ENCODE measurements at regions of chr16 and their contacts with region 1.

Region 1: DNA sequence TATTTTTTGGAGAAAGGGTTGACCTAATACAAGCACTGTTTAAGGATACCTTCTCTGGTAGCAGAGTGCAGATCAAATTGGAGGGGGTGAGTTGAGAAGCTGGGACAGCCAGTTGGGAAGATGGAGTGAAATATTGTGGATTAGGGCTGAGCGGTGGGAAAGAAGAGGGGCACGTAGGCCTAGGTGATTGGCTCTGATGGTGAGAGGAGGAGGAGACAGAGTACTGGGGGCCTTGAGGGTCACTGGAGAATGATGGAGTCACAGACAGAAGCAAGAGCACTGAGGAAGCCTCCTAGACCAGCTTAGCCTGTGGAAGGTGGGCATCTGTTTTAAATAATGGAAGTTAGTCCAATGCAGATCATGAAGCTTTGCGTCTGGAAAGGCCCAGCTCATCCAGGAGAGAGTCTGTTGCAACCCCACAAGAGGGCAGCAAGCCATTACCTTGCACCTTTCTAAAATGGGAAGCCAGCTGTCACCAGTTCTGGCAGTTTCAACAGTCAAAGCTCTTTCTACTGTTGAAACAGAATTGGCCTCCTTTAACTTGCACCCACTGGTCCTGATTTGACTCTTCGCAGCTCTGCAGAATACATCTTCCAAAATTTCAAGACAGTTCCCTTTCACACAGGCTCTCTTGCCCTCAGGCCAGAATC is 11.8 kb downstream of the SLC9A5 start:
- DNase-seq: no peak
- H3K27ac ChIP-seq: no peak overlapping the region
- CTCF ChIP-seq: peak; percentile 58

Region 2: DNA sequence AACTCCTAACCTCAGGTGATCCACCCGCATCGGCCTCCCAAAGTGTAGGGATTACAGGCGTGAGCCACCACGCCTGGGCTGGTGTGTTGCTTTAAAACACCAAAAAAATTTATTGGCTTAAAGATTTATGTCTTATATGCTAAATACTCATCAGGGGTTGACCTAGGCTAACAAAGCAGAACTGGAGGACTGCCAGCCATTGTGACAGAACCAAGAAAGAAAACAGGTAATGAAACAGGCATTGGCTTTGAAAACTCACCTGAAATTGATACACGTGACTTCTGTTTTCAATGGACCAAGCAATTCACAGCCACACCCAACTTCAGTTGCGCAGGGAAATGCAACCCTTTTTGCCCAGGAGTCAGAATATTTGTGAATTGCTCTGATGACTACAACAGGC is 155.7 kb before region 1 on chr16:
- CTCF ChIA-PET with region 1: no interaction called
- POLR2A ChIA-PET with region 1: no interaction called
- DNase-seq: peak; percentile 38
- H3K27ac ChIP-seq: peak overlapping the region; percentile 30; the same call in 1 of the 2 replicates
- CTCF ChIP-seq: no peak

Region 3: DNA sequence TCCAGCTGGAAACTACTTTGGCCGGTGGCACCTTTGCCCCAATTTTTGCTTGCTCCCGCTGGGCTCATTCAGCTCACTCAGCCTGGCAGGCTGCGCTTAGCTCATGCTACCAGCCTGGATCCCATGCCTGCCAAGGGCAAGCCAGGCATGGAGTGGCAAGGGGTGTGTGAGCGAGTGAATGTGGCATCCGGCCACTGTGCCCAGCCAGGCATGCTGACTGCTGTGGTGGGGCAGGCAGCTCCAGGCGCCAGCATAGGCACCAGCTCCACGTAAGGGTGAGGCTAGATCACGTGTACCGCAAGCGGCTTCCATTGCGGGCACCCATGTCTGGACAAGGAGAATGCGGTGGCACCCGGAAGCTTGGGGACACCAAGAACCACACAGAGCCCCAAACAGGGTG is 119.1 kb before region 1 on chr16:
- CTCF ChIA-PET with region 1: no interaction called
- POLR2A ChIA-PET with region 1: no interaction called
- DNase-seq: no peak
- H3K27ac ChIP-seq: no peak overlapping the region
- CTCF ChIP-seq: no peak

Region 4: GRCh38 chr16:67155295-67156142 is 105.0 kb before region 1 on chr16:
- CTCF ChIA-PET with region 1: no interaction called
- POLR2A ChIA-PET with region 1: no interaction called
- DNase-seq: peak; percentile 74
- H3K27ac ChIP-seq: no peak overlapping the region
- CTCF ChIP-seq: peak; percentile 95

Region 5: GRCh38 chr16:67238806-67239470 is 21.6 kb before region 1 on chr16:
- CTCF ChIA-PET with region 1: no interaction called
- POLR2A ChIA-PET with region 1: no interaction called
- DNase-seq: no peak
- H3K27ac ChIP-seq: peak overlapping the region; percentile 92
- CTCF ChIP-seq: no peak

Region 6: DNA sequence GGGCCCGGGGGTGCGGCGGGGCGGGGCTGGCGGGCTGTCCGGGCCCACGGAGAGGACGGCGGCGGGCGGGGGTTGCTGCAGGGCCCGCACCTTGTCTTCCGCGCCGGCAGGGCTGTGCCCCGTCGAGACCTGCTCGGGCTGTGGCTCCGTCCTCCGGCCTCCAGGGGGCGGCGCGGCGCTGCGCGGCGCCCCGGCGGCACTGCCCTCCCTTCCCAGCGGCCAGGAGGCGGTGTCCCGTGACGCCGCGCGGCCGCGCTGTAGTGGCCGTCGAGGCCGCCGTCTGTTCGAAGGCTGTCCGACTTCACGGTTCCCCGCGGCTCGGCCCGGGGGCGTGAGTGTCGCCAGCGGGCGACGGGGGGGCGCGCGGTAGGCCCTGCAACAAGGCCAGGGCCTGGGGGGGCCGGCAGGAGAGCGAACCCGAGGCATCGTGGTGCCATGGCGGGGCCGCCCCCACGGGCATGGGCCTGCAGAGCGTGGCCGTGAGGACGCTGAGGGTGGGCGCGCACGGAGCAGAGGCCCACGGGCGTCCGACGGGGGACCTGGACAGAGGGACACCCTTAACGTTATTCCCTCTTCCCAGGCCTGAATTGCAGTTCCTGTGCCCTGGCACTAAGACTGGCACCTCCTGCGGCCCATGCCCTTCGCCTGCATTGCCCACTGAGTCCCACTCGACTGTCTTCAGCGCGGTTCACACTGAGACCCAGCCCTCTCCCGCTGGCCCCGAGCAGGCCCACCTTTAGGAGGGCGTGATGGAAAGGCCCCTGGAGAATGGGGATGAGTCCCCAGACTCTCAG is 18.9 kb after region 1 on chr16 and contains the start of gene PLEKHG4:
- CTCF ChIA-PET with region 1: interaction called, 12 read pairs
- POLR2A ChIA-PET with region 1: interaction called, 3 read pairs
- DNase-seq: peak; percentile 89
- H3K27ac ChIP-seq: peak within 1 kb of the TSS; percentile 97
- CTCF ChIP-seq: peak; percentile 86

Region 7: DNA sequence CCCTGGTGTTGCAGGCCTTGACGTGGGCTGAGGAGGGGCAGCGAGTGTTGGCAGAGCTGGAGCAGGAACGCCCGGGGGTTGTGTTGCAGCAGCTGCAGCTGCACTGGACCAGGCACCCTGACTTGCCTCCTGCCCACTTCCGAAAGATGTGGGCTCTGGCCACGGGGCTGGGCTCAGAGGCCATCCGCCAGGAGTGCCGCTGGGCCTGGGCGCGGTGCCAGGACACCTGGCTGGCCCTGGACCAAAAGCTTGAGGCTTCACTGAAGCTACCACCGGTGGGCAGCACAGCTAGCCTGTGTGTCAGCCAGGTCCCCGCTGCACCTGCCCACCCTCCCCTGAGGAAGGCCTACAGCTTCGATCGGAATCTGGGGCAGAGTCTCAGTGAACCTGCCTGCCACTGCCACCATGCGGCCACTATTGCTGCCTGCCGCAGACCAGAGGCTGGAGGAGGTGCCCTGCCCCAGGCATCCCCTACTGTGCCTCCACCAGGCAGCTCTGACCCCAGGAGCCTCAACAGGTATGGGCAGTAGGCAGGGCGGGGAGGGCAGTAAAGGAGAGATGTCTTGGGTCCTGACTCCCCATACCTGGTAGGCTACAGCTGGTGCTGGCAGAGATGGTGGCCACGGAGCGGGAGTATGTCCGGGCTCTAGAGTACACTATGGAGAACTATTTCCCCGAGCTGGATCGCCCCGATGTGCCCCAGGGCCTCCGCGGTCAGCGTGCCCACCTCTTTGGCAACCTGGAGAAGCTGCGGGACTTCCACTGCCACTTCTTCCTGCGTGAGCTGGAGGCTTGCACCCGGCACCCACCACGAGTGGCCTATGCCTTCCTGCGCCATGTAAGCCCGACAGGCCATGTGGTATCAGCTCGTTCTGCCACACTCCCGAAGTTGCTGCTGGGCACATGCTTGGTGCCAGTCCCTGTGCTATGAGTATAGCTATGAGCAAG is 24.4 kb after region 1 on chr16:
- CTCF ChIA-PET with region 1: interaction called, 12 read pairs
- POLR2A ChIA-PET with region 1: no interaction called
- DNase-seq: no peak
- H3K27ac ChIP-seq: peak overlapping the region; percentile 65
- CTCF ChIP-seq: peak; percentile 33; the same call in 1 of the 2 replicates

Measured in RWPE1 (cell line).